ENCODE measurements at regions of chr5 and their contacts with region 1.

Region 1: DNA sequence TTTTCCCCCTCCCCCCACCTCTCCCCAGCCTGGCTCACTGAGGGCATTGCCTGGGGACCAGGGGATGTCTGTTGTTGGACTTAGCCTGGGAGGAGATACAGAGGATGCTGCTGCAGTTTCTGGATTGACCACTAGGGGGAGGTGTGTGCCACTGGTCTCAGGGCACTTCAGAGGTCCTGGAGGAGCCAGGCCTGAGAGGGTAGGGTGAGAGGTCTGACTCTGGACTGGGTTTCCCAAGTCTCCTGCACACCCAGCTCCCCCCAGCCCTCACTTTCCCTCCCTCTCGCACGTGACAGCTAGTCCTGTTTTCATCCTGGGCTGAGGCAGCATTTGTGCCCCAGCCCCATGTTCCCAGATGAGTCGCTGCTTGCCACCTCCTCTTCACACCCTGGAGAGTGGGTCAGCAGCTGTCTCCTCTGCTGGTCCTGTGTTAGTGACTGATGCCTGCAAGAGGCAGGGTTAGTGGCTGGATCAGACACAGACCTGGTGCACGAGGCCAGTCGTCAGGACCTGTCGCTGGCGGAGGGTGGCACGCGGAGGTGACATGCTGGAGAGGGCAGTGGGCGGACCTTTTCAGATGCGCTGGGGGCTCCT is 4.4 kb downstream of the IL3 start:
- DNase-seq: peak; percentile 78 to 84
- H3K4me3 ChIP-seq: no peak overlapping the region
- H3K4me3 Mint-ChIP-seq: no peak overlapping the region
- H3K27ac Mint-ChIP-seq: no peak overlapping the region
- H3K4me1 ChIP-seq: no peaks in the 10 kb centered on the region
- H3K4me1 Mint-ChIP-seq: no peaks in the 10 kb centered on the region
- H3K27me3 ChIP-seq: no peaks in the 10 kb centered on the region
- H3K27me3 Mint-ChIP-seq: no peaks in the 10 kb centered on the region
- CTCF ChIP-seq: peak; percentile 91 to 93

Region 2: DNA sequence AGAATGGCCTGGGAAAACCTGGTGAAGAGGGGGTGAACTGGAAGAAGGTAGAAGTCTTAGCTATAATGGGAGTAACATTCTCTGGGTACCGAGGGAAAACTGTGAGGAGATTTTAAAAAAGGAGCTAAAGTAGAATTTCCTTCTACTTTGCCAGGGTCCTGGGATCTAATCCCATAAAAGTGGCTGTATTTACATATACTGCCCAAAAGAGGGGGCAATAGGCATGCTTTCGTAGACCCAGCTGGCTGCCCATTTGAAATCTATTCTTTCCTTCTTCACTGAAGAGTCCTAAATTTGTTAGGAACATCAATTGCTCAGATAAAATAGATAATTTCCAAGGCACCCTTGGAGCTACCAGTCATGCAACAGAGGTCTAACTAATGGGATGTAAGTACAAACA is 641.8 kb before region 1 on chr5:
- CTCF ChIA-PET with region 1: interaction called, 5 read pairs
- POLR2A ChIA-PET with region 1: no interaction called
- intact Hi-C with region 1: loop called (anchors 5 kb)
- DNase-seq: peak in 1 of 2 experiments; percentile 19
- H3K4me3 ChIP-seq: no peak overlapping the region
- H3K4me3 Mint-ChIP-seq: no peak overlapping the region
- H3K27ac Mint-ChIP-seq: no peak overlapping the region
- H3K4me1 ChIP-seq: no peaks in the 10 kb centered on the region
- H3K4me1 Mint-ChIP-seq: no peaks in the 10 kb centered on the region
- H3K27me3 ChIP-seq: no peaks in the 10 kb centered on the region
- H3K27me3 Mint-ChIP-seq: no peaks in the 10 kb centered on the region
- CTCF ChIP-seq: peak; percentile 29 to 51

Region 3: GRCh38 chr5:131589510-131590348 is 475.1 kb before region 1 on chr5:
- CTCF ChIA-PET with region 1: interaction called, 5 read pairs
- POLR2A ChIA-PET with region 1: no interaction called
- intact Hi-C with region 1: loop called (anchors 1 kb)
- DNase-seq: peak; percentile 58 to 66
- H3K4me3 ChIP-seq: no peak overlapping the region
- H3K4me3 Mint-ChIP-seq: no peak overlapping the region
- H3K27ac Mint-ChIP-seq: peak overlapping the region; percentile 61
- H3K4me1 ChIP-seq: peaks cover 10% of the 10 kb centered on the region
- H3K4me1 Mint-ChIP-seq: peaks cover 18% of the 10 kb centered on the region
- H3K27me3 ChIP-seq: no peaks in the 10 kb centered on the region
- H3K27me3 Mint-ChIP-seq: no peaks in the 10 kb centered on the region
- CTCF ChIP-seq: peak; percentile 77 to 82

Region 4: GRCh38 chr5:131952301-131952857 is 112.5 kb before region 1 on chr5:
- CTCF ChIA-PET with region 1: no interaction called
- POLR2A ChIA-PET with region 1: no interaction called
- intact Hi-C with region 1: no loop called
- DNase-seq: no peak
- H3K4me3 ChIP-seq: no peak overlapping the region
- H3K4me3 Mint-ChIP-seq: no peak overlapping the region
- H3K27ac Mint-ChIP-seq: no peak overlapping the region
- H3K4me1 ChIP-seq: no peaks in the 10 kb centered on the region
- H3K4me1 Mint-ChIP-seq: no peaks in the 10 kb centered on the region
- H3K27me3 ChIP-seq: no peaks in the 10 kb centered on the region
- H3K27me3 Mint-ChIP-seq: no peaks in the 10 kb centered on the region
- CTCF ChIP-seq: no peak

Region 5: DNA sequence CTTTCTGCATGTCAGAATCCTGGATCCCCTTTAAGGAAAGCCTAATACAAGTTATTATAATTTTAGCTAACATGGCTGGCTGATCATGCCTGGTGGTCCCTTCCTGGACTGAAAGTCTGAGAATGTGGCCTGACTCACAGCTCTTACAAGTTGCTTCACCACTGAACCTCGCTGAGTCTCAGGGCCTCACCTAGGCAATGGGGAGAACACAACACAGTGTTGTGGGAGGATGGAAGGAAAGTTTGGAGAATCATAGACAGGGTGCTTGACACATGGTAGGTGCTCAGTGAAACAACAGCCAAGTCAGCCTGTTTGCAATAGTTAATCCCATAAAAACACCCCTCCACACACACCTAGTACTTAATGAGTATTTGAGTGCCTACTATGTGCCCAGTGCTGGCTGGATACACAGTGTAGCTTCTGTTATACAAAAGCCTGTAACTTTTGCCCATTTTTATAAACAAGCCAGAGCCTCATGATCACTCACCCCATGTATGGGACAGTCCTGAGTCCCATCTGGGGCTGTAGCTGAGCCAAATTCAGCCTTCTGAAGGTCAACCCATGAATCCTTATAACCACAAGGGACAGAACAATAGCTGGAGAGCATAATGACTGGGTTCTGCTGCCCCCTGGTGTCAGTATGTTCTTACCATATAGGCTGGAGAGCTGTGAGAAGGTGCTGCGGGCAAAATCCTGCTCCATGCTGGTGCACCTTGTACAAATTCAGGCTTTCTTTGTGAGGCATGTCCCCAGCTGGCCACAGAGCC is 57.3 kb before region 1 on chr5:
- CTCF ChIA-PET with region 1: no interaction called
- POLR2A ChIA-PET with region 1: no interaction called
- intact Hi-C with region 1: loop called (anchors 2 kb)
- DNase-seq: peak; percentile 83 to 84
- H3K4me3 ChIP-seq: no peak overlapping the region
- H3K4me3 Mint-ChIP-seq: no peak overlapping the region
- H3K27ac Mint-ChIP-seq: no peak overlapping the region
- H3K4me1 ChIP-seq: 0 out of 2 replicates have a peak, but pooled peaks cover 3% of the 10 kb centered on the region
- H3K4me1 Mint-ChIP-seq: peaks cover 3% of the 10 kb centered on the region
- H3K27me3 ChIP-seq: no peaks in the 10 kb centered on the region
- H3K27me3 Mint-ChIP-seq: peaks cover 3% of the 10 kb centered on the region
- CTCF ChIP-seq: peak; percentile 82

Region 6: GRCh38 chr5:132013006-132013689 is 51.7 kb before region 1 on chr5:
- CTCF ChIA-PET with region 1: interaction called, 12 read pairs
- POLR2A ChIA-PET with region 1: no interaction called
- intact Hi-C with region 1: loop called (anchors 2 kb)
- DNase-seq: peak in 1 of 2 experiments; percentile 5
- H3K4me3 ChIP-seq: no peak overlapping the region
- H3K4me3 Mint-ChIP-seq: no peak overlapping the region
- H3K27ac Mint-ChIP-seq: no peak overlapping the region
- H3K4me1 ChIP-seq: no peaks in the 10 kb centered on the region
- H3K4me1 Mint-ChIP-seq: no peaks in the 10 kb centered on the region
- H3K27me3 ChIP-seq: no peaks in the 10 kb centered on the region; the same call in none of the 2 replicates
- H3K27me3 Mint-ChIP-seq: peaks cover 15% of the 10 kb centered on the region
- CTCF ChIP-seq: no peak

Region 7: GRCh38 chr5:132134384-132134783 is 69.5 kb after region 1 on chr5:
- CTCF ChIA-PET with region 1: no interaction called
- POLR2A ChIA-PET with region 1: no interaction called
- intact Hi-C with region 1: loop called (anchors 1 kb)
- DNase-seq: peak in 1 of 2 experiments; percentile 24
- H3K4me3 ChIP-seq: no peak overlapping the region
- H3K4me3 Mint-ChIP-seq: no peak overlapping the region
- H3K27ac Mint-ChIP-seq: no peak overlapping the region
- H3K4me1 ChIP-seq: no peaks in the 10 kb centered on the region
- H3K4me1 Mint-ChIP-seq: no peaks in the 10 kb centered on the region
- H3K27me3 ChIP-seq: no peaks in the 10 kb centered on the region; the same call in 1 of the 2 replicates
- H3K27me3 Mint-ChIP-seq: peaks cover 19% of the 10 kb centered on the region
- CTCF ChIP-seq: peak; percentile 40 to 44

Region 8: GRCh38 chr5:132180134-132180745 is 115.4 kb after region 1 on chr5:
- CTCF ChIA-PET with region 1: interaction called, 3 read pairs
- POLR2A ChIA-PET with region 1: no interaction called
- intact Hi-C with region 1: loop called (anchors 2 kb)
- DNase-seq: peak in 1 of 2 experiments; percentile 49
- H3K4me3 ChIP-seq: no peak overlapping the region
- H3K4me3 Mint-ChIP-seq: no peak overlapping the region
- H3K27ac Mint-ChIP-seq: no peak overlapping the region
- H3K4me1 ChIP-seq: peaks cover 3% of the 10 kb centered on the region; the same call in 1 of the 2 replicates
- H3K4me1 Mint-ChIP-seq: peaks cover 13% of the 10 kb centered on the region
- H3K27me3 ChIP-seq: no peaks in the 10 kb centered on the region
- H3K27me3 Mint-ChIP-seq: no peaks in the 10 kb centered on the region
- CTCF ChIP-seq: peak; percentile 71 to 76

Region 9: DNA sequence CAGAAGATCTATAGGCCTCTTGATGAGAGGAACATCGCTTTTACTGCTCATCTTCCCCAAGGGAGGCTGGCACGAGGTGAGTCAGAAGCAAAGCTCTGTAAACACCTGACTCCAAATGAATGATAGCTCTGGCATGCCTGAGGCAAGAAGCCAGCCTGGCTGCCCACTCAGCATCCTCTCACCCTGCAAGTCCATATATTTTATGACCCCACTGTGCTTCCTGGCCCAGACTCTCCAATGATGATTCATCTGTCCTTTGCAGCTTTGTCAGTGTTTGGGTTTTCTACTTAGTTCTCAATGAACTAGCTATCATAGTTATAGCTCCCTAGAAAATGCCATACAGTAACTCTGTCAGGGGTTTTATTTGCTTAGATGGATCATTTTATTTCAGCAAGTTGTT is 1599.6 kb after region 1 on chr5:
- CTCF ChIA-PET with region 1: no interaction called
- POLR2A ChIA-PET with region 1: no interaction called
- intact Hi-C with region 1: no loop called
- DNase-seq: no peak
- H3K4me3 ChIP-seq: no peak overlapping the region
- H3K4me3 Mint-ChIP-seq: no peak overlapping the region
- H3K27ac Mint-ChIP-seq: no peak overlapping the region
- H3K4me1 ChIP-seq: no peaks in the 10 kb centered on the region
- H3K4me1 Mint-ChIP-seq: no peaks in the 10 kb centered on the region
- H3K27me3 ChIP-seq: no peaks in the 10 kb centered on the region
- H3K27me3 Mint-ChIP-seq: peaks cover 12% of the 10 kb centered on the region
- CTCF ChIP-seq: no peak

Measured in Caco-2 (cell line).